Activated CD8-positive, alpha-beta T cell treated with anti-CD3 and anti-CD28 coated beads for 36 hours (primary cell): ENCODE measurements at regions of chr1 and their contacts with region 1.

Region 1: DNA sequence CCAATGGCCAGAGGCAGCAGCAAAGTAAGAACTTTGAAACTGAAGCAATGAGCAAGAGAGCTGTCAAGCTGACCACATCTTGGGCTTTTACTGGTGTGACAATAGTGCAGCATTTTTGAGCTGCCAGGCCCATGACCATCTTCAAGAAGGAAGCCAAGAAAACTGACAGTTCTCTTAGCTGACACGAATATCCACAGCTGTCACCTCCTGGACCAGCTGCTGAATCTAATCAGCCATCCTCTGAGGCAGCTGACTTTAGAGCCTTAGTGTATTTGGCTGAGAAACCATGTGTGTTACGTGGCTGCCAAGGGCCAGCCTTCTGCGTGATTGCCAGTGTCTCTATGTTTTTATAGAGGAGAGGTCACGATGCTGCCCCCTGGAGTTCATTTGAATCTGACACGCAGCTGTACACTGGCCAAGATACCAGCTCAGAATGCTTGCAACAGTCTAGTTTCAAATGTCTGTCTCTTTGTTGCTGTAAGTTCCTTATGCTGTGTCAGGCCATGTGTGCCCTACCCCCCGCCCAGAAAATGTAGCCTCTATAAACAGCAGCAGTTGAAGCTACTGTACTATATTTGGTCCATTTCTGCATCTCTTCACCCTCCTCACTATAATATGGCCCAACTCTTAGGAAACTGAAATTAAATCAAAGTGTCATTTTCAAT is 39.7 kb downstream of the PALMD start:
- DNase-seq: peak; percentile 71
- ATAC-seq: peak; percentile 86
- H3K4me3 Mint-ChIP-seq: no peak overlapping the region
- H3K27ac Mint-ChIP-seq: no peak overlapping the region
- H3K4me1 Mint-ChIP-seq: no peaks in the 10 kb centered on the region
- H3K27me3 Mint-ChIP-seq: no peaks in the 10 kb centered on the region
- CTCF ChIP-seq: peak; percentile 74

Region 2: GRCh38 chr1:99180343-99180808 is 505.3 kb before region 1 on chr1:
- CTCF ChIA-PET with region 1: interaction called, 3 read pairs
- POLR2A ChIA-PET with region 1: no interaction called
- intact Hi-C with region 1: loop called (anchors 10 kb)
- DNase-seq: peak; percentile 83
- ATAC-seq: peak; percentile 93
- H3K4me3 Mint-ChIP-seq: no peak overlapping the region
- H3K27ac Mint-ChIP-seq: no peak overlapping the region
- H3K4me1 Mint-ChIP-seq: no peaks in the 10 kb centered on the region
- H3K27me3 Mint-ChIP-seq: no peaks in the 10 kb centered on the region
- CTCF ChIP-seq: peak; percentile 79

Region 3: GRCh38 chr1:99672500-99673213 is 13.0 kb before region 1 on chr1:
- CTCF ChIA-PET with region 1: interaction called, 10 read pairs
- POLR2A ChIA-PET with region 1: no interaction called
- intact Hi-C with region 1: no loop called
- DNase-seq: no peak
- ATAC-seq: no peak
- H3K4me3 Mint-ChIP-seq: no peak overlapping the region
- H3K27ac Mint-ChIP-seq: no peak overlapping the region
- H3K4me1 Mint-ChIP-seq: no peaks in the 10 kb centered on the region
- H3K27me3 Mint-ChIP-seq: peaks cover 20% of the 10 kb centered on the region
- CTCF ChIP-seq: no peak

Region 4: DNA sequence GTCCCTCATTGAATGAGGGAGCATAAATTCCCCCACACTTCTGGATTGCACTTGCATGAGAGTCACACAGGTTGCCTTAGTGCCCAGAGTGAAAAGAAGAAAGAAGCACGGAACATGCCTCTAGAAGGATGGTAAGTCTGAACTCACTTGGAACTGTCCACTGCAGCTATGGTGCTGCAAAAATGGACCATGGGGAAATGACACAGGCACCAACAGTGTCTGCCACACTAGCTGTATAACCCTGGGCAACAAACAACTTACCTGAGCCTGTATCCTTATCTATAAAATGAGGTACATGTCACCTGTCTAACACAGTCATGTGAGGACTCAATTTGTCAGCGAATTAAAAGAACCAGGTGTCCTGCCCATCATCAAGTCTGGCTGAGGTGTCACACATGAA is 11.0 kb after region 1 on chr1:
- CTCF ChIA-PET with region 1: interaction called, 13 read pairs
- POLR2A ChIA-PET with region 1: no interaction called
- intact Hi-C with region 1: no loop called
- DNase-seq: no peak
- ATAC-seq: no peak
- H3K4me3 Mint-ChIP-seq: no peak overlapping the region
- H3K27ac Mint-ChIP-seq: no peak overlapping the region
- H3K4me1 Mint-ChIP-seq: no peaks in the 10 kb centered on the region
- H3K27me3 Mint-ChIP-seq: peaks cover 22% of the 10 kb centered on the region
- CTCF ChIP-seq: no peak

Region 5: GRCh38 chr1:99707535-99708142 is 22.0 kb after region 1 on chr1:
- CTCF ChIA-PET with region 1: interaction called, 11 read pairs
- POLR2A ChIA-PET with region 1: no interaction called
- intact Hi-C with region 1: no loop called
- DNase-seq: peak; percentile 82
- ATAC-seq: peak; percentile 47
- H3K4me3 Mint-ChIP-seq: no peak overlapping the region
- H3K27ac Mint-ChIP-seq: no peak overlapping the region
- H3K4me1 Mint-ChIP-seq: peaks cover 3% of the 10 kb centered on the region
- H3K27me3 Mint-ChIP-seq: no peaks in the 10 kb centered on the region
- CTCF ChIP-seq: peak; percentile 95